Heart left ventricle (tissue), 16 donors: ENCODE measurements at regions of chr19 and their contacts with region 1.

Region 1: DNA sequence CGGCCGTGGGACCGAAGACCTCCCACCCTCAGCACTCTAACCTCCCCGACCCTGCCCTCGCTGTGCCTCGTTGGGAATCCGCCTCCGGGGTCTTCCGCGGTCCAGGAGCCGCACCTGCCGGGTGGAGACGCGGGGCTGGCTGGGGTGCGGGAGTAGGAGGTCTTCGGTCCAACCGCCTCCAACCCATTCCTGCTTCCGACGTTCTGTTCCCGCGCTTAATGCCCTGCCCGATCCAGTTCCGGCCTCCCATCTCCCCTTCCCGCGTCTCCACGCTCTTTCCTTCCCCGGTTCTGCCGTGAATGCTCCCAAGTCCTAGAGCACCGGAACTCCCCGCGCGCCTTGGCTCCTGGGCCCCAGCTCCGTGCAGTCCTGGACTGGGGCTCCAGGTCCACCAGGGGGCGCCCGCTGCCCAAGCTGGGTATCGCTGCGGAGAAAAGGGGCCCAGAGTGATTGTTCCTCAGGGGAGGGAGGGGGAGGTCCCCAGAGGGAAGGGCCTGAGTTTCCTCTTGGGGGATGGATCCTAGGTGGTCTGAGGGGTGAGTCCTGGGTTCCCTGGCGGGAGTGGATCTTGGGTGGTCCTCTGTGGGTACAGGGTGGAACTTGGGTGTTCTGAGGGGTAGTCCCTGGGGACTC is 14.1 kb upstream of the TNFSF9 start:
- DNase-seq: peak; percentile 85 to 96 (median 89)
- ATAC-seq: peak; percentile 90 to 93 (median 92)
- H3K4me3 ChIP-seq: peak overlapping the region; percentile 45 to 71 (median 58)
- H3K27ac ChIP-seq: peak overlapping the region in 10 of 12 donors; percentile 11 to 78 (median 56)
- H3K4me1 ChIP-seq: peaks cover 0 to 21% (median 6%) of the 10 kb centered on the region in 12 donors
- H3K27me3 ChIP-seq: peaks cover 0 to 11% (median 0%) of the 10 kb centered on the region in 9 donors
- CTCF ChIP-seq: peak; percentile 88 to 97 (median 95)
- POLR2A ChIP-seq: no peak

Region 2: GRCh38 chr19:5913739-5914357 is 602.9 kb before region 1 on chr19 and contains the start of gene CAPS:
- intact Hi-C with region 1: no loop called
- DNase-seq: peak in 3 of 5 donors; percentile 54 to 78 (median 74)
- ATAC-seq: peak; percentile 56 to 79 (median 78)
- H3K4me3 ChIP-seq: no peak within 1 kb of the TSS
- H3K27ac ChIP-seq: peak within 1 kb of the TSS in 4 of 12 donors; percentile 29 to 60 (median 52)
- H3K4me1 ChIP-seq: peaks cover 0 to 32% (median 14%) of the 10 kb centered on the region in 12 donors
- H3K27me3 ChIP-seq: no peaks in the 10 kb centered on the region
- CTCF ChIP-seq: no peak
- POLR2A ChIP-seq: no peak
- total RNA-seq, gene CAPS: 1.2 to 6.2 (median 3.3) TPM

Region 3: DNA sequence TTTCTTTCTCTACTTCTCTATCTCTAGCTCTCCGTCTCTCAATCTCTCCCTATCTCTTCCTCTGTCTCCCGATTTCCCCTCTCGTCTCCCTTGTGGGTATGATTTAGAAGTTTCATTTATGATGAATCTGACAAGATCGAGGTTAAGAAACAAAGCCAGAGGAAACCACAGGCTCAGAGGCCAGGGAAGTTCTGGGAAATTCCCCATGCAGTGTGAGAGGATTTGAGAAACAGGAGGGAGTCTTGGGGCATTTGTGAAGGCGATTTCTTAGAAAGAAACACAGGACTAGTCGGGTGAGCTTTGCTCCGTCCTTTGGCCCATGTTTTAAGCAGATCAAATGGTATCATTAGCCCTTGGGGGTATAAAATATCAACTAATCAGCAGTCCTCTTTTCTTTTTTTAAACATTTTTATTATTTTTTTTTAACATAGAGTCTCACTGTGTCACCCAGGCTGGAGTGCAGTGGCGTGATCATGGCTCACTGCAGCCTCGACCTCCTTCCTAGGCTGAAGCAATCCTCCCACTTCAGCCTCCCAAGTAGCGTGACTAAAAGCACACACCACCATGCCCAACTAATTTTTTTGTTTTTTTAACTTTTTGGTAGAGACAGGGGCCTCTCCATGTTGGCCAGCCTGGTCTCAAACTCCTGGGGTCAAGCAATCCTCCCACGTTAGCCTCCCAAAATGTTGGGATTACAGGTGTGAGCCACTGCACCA is 39.9 kb after region 1 on chr19:
- intact Hi-C with region 1: no loop called
- DNase-seq: no peak
- ATAC-seq: no peak
- H3K4me3 ChIP-seq: no peak overlapping the region
- H3K27ac ChIP-seq: no peak overlapping the region
- H3K4me1 ChIP-seq: peaks cover 0 to 4% (median 0%) of the 10 kb centered on the region in 12 donors
- H3K27me3 ChIP-seq: peaks cover 0 to 38% (median 14%) of the 10 kb centered on the region in 9 donors
- CTCF ChIP-seq: no peak
- POLR2A ChIP-seq: no peak

Region 4: DNA sequence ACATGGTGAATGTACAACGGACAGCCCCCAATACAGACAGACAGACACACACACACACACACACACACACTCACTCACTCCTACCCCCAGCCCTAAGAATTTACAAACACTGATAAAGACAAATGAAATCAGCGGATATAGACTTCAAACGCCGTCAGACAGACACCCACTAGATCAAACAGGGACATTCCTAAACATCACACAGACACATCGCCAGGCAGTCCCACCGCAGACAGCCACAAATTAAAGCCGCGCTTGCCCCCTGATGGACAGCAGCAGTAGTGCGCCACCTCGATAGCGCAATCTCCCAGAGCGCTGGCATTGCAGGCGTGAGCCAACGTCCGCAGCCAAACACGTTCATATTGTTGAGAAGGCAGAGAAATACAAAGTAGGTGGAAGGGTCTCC is 345.9 kb after region 1 on chr19:
- intact Hi-C with region 1: loop called in 9 of 10 experiments (anchors 1 to 5 kb)
- DNase-seq: peak; percentile 68 to 89 (median 80)
- ATAC-seq: peak; percentile 69 to 96 (median 90)
- H3K4me3 ChIP-seq: peak overlapping the region in 10 of 12 donors; percentile 8 to 53 (median 34)
- H3K27ac ChIP-seq: peak overlapping the region in 1 of 12 donors; percentile 60
- H3K4me1 ChIP-seq: peaks cover 0 to 9% (median 5%) of the 10 kb centered on the region in 12 donors
- H3K27me3 ChIP-seq: peaks cover 0 to 23% (median 0%) of the 10 kb centered on the region in 9 donors
- CTCF ChIP-seq: peak; percentile 67 to 86 (median 80)
- POLR2A ChIP-seq: no peak